Breast epithelium (tissue), 4 donors: ENCODE measurements at regions of chr4 and their contacts with region 1.

Region 1: GRCh38 chr4:7434766-7435150 is at the start of gene PSAPL1:
- DNase-seq: no peak
- H3K4me3 ChIP-seq: no peak within 1 kb of the TSS
- H3K27ac ChIP-seq: no peak within 1 kb of the TSS
- H3K4me1 ChIP-seq: no peaks in the 10 kb centered on the region
- H3K27me3 ChIP-seq: no peaks in the 10 kb centered on the region
- CTCF ChIP-seq: no peak
- POLR2A ChIP-seq: no peak
- total RNA-seq, gene PSAPL1: 0.15 TPM in 1 of 3 donors, not detected in the others

Region 2: GRCh38 chr4:7266525-7267292 is 168.0 kb before region 1 on chr4:
- intact Hi-C with region 1: no loop called
- DNase-seq: no peak
- H3K4me3 ChIP-seq: no peak overlapping the region
- H3K27ac ChIP-seq: no peak overlapping the region
- H3K4me1 ChIP-seq: no peaks in the 10 kb centered on the region
- H3K27me3 ChIP-seq: peaks cover 0 to 5% of the 10 kb centered on the region in 2 donors
- CTCF ChIP-seq: no peak
- POLR2A ChIP-seq: no peak

Region 3: GRCh38 chr4:7392438-7393421 is 42.0 kb before region 1 on chr4:
- intact Hi-C with region 1: no loop called
- DNase-seq: peak; percentile 13 to 40
- H3K4me3 ChIP-seq: no peak overlapping the region
- H3K27ac ChIP-seq: no peak overlapping the region
- H3K4me1 ChIP-seq: no peaks in the 10 kb centered on the region
- H3K27me3 ChIP-seq: peaks cover 0 to 39% of the 10 kb centered on the region in 2 donors
- CTCF ChIP-seq: no peak
- POLR2A ChIP-seq: no peak

Region 4: DNA sequence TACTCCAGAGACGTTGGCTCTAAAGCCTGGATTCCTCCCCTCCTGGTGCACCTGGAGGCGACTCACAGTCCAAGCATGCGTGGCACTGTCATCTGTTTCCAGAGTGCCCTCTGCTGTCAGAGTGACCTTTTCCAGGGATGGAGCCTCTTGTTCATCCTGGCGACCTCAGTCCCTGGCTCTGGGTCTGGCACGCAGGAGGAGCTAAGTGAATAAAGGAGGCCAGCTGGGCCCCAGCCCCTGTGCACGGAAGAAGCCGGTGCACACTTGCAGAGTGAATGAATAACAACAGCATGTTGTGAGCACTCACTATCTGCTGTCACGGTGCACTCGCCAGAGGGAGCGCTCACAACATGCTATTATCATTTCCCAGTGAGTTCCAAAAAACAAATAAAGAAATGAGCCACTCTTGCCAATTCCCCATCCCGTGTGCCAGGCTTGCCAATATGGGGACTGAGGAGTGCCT is 27.8 kb after region 1 on chr4:
- intact Hi-C with region 1: loop called (anchors 1 kb)
- DNase-seq: no peak
- H3K4me3 ChIP-seq: no peak overlapping the region
- H3K27ac ChIP-seq: no peak overlapping the region
- H3K4me1 ChIP-seq: no peaks in the 10 kb centered on the region
- H3K27me3 ChIP-seq: peaks cover 0 to 3% of the 10 kb centered on the region in 2 donors
- CTCF ChIP-seq: no peak
- POLR2A ChIP-seq: no peak